PC-9 (cell line): ENCODE measurements at regions of chr6 and their contacts with region 1.

Region 1: GRCh38 chr6:43496370-43497128 is 13.6 kb downstream of the LRRC73 start:
- DNase-seq: peak; percentile 73 to 78
- H3K4me3 ChIP-seq: no peak overlapping the region
- H3K27ac ChIP-seq: peak overlapping the region; percentile 57
- H3K4me1 ChIP-seq: peaks cover 31% of the 10 kb centered on the region
- H3K27me3 ChIP-seq: no peaks in the 10 kb centered on the region
- CTCF ChIP-seq: peak; percentile 82

Region 2: GRCh38 chr6:43263314-43264178 is 233.0 kb before region 1 on chr6:
- CTCF ChIA-PET with region 1: interaction called, 6 read pairs
- POLR2A ChIA-PET with region 1: no interaction called
- intact Hi-C with region 1: loop called (anchors 1 kb)
- DNase-seq: peak in 1 of 2 experiments; percentile 74
- H3K4me3 ChIP-seq: no peak overlapping the region
- H3K27ac ChIP-seq: no peak overlapping the region
- H3K4me1 ChIP-seq: no peaks in the 10 kb centered on the region
- H3K27me3 ChIP-seq: no peaks in the 10 kb centered on the region
- CTCF ChIP-seq: peak; percentile 83

Region 3: DNA sequence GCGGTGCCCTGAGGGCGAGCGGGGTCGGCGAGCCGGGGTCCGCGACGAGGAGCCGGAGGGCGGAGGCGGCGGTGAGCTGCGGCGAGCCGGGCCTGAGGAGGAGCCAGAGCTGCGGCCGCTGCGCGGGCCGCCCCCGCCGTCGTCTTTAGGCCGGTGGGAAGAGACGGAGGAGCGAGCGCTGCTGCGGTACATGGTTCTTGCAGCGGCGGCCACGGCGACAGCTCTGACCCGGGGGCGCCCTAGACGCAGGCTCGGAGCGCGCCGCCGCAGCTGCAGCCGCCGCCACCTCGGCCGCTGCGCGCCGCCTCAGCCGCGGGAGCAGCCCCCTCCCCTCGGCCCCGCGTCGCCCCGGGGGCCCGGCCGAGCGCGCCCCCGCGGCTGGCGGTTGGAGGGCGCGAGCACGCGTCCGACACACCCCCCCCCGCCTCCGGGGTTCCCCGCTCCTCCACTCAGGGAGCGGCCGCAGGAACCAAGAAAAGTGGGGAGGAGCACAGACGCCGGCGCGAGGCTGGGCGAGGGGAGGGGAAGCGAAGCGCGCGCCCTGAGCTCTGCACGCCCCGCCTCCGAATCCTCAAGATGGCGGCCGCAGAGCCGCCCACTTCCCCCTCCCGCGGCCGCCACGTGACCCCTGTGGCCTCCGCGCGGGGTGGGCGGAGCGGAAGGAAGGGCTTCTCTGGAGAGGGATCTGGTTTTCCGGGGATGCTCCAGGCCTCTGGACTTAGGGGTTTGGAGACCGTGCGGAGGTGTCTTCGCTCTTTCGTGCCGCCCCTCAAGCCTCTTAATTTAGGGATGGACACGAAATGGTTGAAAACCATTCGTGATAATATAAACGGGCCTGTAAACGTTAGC is 127.2 kb before region 1 on chr6 and contains the start of gene ZNF318:
- CTCF ChIA-PET with region 1: no interaction called
- POLR2A ChIA-PET with region 1: interaction called, 10 read pairs
- intact Hi-C with region 1: no loop called
- DNase-seq: peak; percentile 86 to 96
- H3K4me3 ChIP-seq: peak within 1 kb of the TSS; percentile 71
- H3K27ac ChIP-seq: peak within 1 kb of the TSS; percentile 85
- H3K4me1 ChIP-seq: peaks cover 34% of the 10 kb centered on the region
- H3K27me3 ChIP-seq: no peaks in the 10 kb centered on the region
- CTCF ChIP-seq: no peak
- total RNA-seq, gene ZNF318: 14.9 and 17.1 TPM in 2 replicates

Region 4: DNA sequence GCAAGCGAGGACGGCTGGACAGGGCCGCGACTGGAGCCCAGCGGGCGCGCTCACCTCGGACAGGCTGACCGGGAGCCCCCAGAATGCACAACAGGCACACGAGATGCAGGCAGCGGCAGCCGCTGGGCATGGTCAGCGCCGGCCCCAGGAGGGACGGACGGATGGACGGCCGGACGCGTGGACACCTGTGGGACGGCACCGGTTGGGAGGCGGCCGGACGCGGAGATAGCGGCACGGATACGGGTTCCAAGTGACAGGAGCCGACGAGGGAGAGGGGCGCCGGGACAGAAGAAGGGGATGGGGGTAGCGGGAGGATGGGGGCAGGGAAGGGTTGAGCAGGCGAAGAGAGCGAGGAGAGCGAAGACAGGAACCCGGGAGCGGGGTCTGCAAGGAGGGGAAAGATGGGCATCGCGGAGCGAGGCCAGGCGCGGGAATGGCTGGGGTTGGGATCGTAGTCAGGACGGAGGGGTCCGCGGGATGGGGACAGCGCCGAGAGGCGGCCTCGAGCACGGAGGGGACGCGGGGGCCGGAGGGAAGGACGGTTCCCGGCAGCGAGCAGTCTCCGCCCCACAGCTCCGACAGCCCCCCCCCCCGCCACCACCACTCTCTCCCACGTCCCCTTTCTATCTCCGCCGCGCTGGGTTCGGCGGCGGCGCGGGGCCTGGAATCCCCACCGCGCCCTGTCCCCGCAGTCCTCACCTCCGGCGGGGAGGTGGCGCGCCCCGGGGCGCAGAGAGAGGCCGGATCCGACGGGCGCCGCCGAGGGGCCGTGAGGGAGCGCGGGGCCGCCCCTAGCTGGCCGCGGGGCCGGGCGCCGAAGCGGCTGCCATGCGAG is 41.6 kb before region 1 on chr6:
- CTCF ChIA-PET with region 1: interaction called, 15 read pairs
- POLR2A ChIA-PET with region 1: interaction called, 4 read pairs
- intact Hi-C with region 1: loop called (anchors 1 kb)
- DNase-seq: peak in 1 of 2 experiments; percentile 86
- H3K4me3 ChIP-seq: peak overlapping the region; percentile 72
- H3K27ac ChIP-seq: no peak overlapping the region
- H3K4me1 ChIP-seq: 0 out of 2 replicates have a peak, but pooled peaks cover 14% of the 10 kb centered on the region
- H3K27me3 ChIP-seq: no peaks in the 10 kb centered on the region
- CTCF ChIP-seq: peak; percentile 38; the same call in 1 of the 2 replicates

Region 5: DNA sequence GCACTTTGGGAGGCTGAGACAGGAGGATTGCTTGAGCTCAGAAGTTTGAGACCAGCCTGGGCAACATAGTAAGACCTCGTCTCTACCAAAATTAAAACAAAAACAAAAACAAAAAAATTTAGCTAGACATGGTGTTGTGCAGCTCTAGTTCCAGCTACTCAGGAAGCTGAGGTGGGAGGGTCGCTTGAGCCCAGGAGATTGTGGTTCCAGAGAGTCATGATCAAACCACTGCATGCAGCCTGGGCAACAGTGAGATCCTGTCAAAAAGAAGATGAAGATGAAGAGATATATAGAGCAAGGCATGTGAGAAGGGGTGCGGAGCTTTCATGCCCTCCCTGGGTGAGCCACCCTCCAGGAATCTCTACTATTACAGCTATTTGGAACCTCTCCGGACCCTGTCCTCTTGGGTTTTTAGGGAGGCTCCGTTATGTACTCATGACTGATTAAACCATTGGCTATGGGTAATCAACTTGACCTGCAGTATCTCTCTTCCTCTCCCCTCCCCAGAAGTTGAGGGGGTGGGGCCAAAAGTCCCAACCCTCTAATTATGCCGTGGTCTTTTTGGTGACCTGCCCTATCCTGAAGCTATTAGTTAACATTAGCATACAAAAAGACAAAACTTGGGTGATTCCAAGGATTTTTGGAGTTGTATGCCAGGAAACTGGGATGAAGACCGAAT is 88.5 kb after region 1 on chr6:
- CTCF ChIA-PET with region 1: no interaction called
- POLR2A ChIA-PET with region 1: no interaction called
- intact Hi-C with region 1: no loop called
- DNase-seq: no peak
- H3K4me3 ChIP-seq: no peak overlapping the region
- H3K27ac ChIP-seq: no peak overlapping the region
- H3K4me1 ChIP-seq: no peaks in the 10 kb centered on the region
- H3K27me3 ChIP-seq: no peaks in the 10 kb centered on the region
- CTCF ChIP-seq: no peak